ENCODE measurements at regions of chr20 and their contacts with region 1.

Region 1: GRCh38 chr20:25399037-25399430 is 8.4 kb upstream of the ABHD12 start:
- DNase-seq: peak; percentile 67
- ATAC-seq: peak; percentile 94
- H3K4me3 ChIP-seq: no peak overlapping the region
- H3K27ac ChIP-seq: peak overlapping the region; percentile 89
- H3K4me1 ChIP-seq: peaks cover 38% of the 10 kb centered on the region
- H3K27me3 ChIP-seq: no peaks in the 10 kb centered on the region
- CTCF ChIP-seq: peak; percentile 82

Region 2: DNA sequence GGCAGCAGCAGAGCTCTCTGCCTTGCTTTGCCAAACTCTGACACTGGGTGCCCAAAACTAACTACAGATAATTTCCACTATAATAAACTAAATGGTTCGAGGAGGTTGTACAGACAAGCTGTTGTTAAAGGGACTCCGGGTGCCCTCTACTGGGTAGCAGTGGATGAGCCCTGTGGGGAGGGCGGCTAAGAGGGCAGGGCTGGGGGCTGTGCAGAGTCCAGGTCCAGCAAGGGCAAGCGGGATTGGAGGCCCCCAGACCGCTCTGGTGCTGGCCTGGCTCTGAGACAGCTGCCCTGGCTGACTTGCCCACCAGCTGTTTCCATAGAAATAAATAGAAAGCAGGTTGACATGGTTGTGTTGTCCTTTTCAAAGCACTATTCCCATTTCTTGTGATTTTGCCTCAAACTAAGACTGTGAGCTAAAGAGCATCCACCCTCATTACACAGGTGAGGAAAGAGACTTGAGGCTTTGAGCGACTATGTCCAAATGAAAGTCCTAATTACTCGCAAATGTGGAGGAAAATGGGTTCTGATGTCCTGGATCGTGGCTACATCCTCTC is 617.5 kb before region 1 on chr20:
- CTCF ChIA-PET with region 1: no interaction called
- POLR2A ChIA-PET with region 1: no interaction called
- in situ Hi-C with region 1: no loop called
- intact Hi-C with region 1: no loop called
- DNase-seq: no peak
- ATAC-seq: peak; percentile 88
- H3K4me3 ChIP-seq: no peak overlapping the region
- H3K27ac ChIP-seq: no peak overlapping the region
- H3K4me1 ChIP-seq: no peaks in the 10 kb centered on the region
- H3K27me3 ChIP-seq: no peaks in the 10 kb centered on the region; the same call in 1 of the 2 replicates
- CTCF ChIP-seq: peak; percentile 83

Region 3: DNA sequence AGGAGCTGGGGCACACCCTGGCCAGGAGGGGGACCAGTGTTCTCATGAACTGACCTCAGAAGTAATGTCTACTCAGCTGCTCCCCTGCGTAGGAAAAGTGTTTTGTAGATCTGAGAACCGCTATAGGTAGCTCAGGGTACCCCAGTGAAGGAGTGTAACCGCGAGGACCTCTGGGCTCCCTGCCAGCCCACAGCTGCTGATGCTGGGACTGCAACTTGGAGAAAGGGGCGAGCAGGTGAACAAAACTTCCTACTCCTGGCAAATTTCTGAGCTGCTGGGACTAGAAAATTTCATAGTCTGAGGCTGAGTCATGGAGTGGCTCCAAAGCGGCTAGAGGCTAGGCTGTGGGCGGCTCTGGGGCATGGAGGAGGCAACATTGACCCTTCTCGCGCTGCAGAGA is 99.2 kb before region 1 on chr20:
- CTCF ChIA-PET with region 1: interaction called, 22 read pairs
- POLR2A ChIA-PET with region 1: interaction called, 5 read pairs
- in situ Hi-C with region 1: no loop called
- intact Hi-C with region 1: loop called (anchors 2 kb)
- DNase-seq: no peak
- ATAC-seq: peak; percentile 11
- H3K4me3 ChIP-seq: no peak overlapping the region
- H3K27ac ChIP-seq: peak overlapping the region; percentile 78
- H3K4me1 ChIP-seq: peaks cover 70% of the 10 kb centered on the region
- H3K27me3 ChIP-seq: no peaks in the 10 kb centered on the region
- CTCF ChIP-seq: no peak

Region 4: DNA sequence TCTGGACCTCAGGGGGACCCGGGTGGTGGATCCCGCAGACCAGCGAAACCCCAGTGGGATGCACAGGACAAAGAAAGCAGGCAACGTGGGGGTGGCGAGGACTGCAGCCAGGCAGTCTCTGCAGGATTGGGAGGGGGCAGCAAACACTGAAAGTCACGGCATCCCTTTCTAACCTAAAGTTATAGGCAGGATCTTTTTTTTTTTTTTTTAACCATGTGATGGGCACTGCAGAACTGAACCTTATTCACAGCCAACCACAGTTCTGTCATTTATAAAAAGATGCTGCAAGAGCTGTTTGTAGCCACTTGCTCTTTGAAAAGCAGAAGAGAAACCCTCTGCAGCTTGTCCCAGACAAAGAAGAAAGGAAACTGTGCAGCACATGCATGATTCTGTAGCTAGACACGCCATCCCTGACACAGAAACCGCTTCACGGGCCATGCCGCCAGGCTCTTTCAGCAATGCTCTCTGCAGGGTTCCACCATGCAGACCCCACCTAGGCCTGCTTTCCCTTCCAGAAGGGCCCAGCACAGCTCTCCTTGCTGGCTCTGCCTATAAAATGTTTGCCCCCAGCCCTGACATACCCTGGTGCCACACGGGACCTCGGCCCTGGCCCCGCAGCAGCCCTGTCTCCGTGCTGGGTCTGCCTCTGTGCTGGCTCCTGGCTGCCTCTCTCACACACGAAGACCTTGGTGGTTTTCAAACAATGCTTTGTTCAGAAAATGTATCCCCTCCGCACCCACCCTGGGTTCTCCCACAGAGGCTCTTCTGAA is 80.4 kb before region 1 on chr20:
- CTCF ChIA-PET with region 1: interaction called, 15 read pairs
- POLR2A ChIA-PET with region 1: no interaction called
- in situ Hi-C with region 1: no loop called
- intact Hi-C with region 1: no loop called
- DNase-seq: no peak
- ATAC-seq: no peak
- H3K4me3 ChIP-seq: no peak overlapping the region
- H3K27ac ChIP-seq: no peak overlapping the region
- H3K4me1 ChIP-seq: peaks cover 24% of the 10 kb centered on the region
- H3K27me3 ChIP-seq: no peaks in the 10 kb centered on the region
- CTCF ChIP-seq: no peak

Region 5: GRCh38 chr20:25336561-25337422 is 62.2 kb before region 1 on chr20:
- CTCF ChIA-PET with region 1: interaction called, 25 read pairs
- POLR2A ChIA-PET with region 1: interaction called, 6 read pairs
- in situ Hi-C with region 1: no loop called
- intact Hi-C with region 1: loop called (anchors 2 kb)
- DNase-seq: no peak
- ATAC-seq: peak; percentile 92
- H3K4me3 ChIP-seq: no peak overlapping the region
- H3K27ac ChIP-seq: peak overlapping the region; percentile 23; the same call in 1 of the 2 replicates
- H3K4me1 ChIP-seq: peaks cover 25% of the 10 kb centered on the region
- H3K27me3 ChIP-seq: no peaks in the 10 kb centered on the region
- CTCF ChIP-seq: peak; percentile 73

Region 6: GRCh38 chr20:25720294-25720693 is 321.3 kb after region 1 on chr20:
- CTCF ChIA-PET with region 1: no interaction called
- POLR2A ChIA-PET with region 1: no interaction called
- in situ Hi-C with region 1: no loop called
- intact Hi-C with region 1: no loop called
- DNase-seq: no peak
- ATAC-seq: no peak
- H3K4me3 ChIP-seq: no peak overlapping the region
- H3K27ac ChIP-seq: no peak overlapping the region
- H3K4me1 ChIP-seq: no peaks in the 10 kb centered on the region
- H3K27me3 ChIP-seq: no peaks in the 10 kb centered on the region
- CTCF ChIP-seq: no peak

Measured in Panc1 (cell line).